ENCODE measurements at regions of chr1 and their contacts with region 1.

Region 1: GRCh38 chr1:85707990-85708828 is at the start of gene ZNHIT6:
- DNase-seq: peak; percentile 95
- ATAC-seq: peak; percentile 96
- H3K4me3 ChIP-seq: peak within 1 kb of the TSS; percentile 67 to 84 (median 77)
- H3K27ac ChIP-seq: peak within 1 kb of the TSS; percentile 83
- H3K4me1 ChIP-seq: peaks cover 34% of the 10 kb centered on the region
- H3K27me3 ChIP-seq: no peaks in the 10 kb centered on the region; a peak in 1 of 5 replicates
- CTCF ChIP-seq: peak; percentile 53
- EP300 ChIP-seq: peak in 1 of 2 experiments; percentile 27; a peak in 1 of 4 replicates
- POLR2A ChIP-seq: peak; percentile 68 to 80
- RAD21 ChIP-seq: 0 out of 2 replicates have a peak, but pooled peaks have one; percentile 51
- total RNA-seq, gene ZNHIT6: 15.2 and 18.8 TPM in 2 replicates

Region 2: DNA sequence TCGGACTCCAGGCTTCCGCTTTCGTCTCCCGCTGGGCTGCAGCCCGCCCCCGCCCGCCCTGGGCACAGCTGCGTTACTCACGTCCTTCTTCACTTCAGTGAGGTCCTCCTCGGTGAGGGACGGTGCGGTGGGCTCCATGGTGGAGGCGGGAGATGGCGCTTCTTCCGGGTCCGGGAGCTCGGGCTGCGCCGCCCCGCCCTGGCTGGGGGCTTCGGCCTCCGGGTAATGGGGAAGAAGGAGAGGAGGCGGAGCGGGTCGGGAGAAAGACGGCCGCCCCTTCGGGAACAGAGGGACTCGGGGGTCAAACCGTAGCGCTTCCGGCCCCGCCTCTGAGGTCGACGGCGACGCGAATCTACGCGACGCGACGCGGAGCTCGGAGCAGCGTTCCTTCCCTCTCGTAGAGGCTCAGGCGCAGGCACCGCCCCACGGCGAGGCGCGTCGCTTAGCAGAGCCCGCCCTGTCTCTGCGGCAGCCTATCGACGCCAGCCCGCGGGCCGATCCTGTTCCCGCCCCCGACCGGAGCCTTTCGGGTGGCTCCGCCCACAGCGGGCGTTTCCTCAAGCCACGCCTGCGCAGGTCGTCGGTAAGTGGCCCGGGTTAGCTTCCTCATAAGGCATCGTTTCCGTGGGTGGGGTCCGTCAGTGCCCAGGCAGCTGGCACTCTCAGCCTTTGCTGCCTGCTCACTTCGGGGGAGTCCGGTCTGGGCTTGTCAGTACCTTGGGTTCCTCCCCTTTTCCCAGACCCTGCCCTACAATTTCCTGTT is 431.8 kb before region 1 on chr1 and contains the start of gene BCL10:
- CTCF ChIA-PET with region 1: no interaction called
- POLR2A ChIA-PET with region 1: interaction called, 15 read pairs
- in situ Hi-C with region 1: no loop called
- intact Hi-C with region 1: no loop called
- DNase-seq: peak; percentile 94
- ATAC-seq: peak; percentile 99
- H3K4me3 ChIP-seq: peak within 1 kb of the TSS; percentile 87 to 100 (median 89)
- H3K27ac ChIP-seq: peak within 1 kb of the TSS; percentile 83
- H3K4me1 ChIP-seq: peaks cover 61% of the 10 kb centered on the region
- H3K27me3 ChIP-seq: no peaks in the 10 kb centered on the region; a peak in 1 of 5 replicates
- CTCF ChIP-seq: no peak
- EP300 ChIP-seq: no peak
- POLR2A ChIP-seq: peak; percentile 78 to 87
- RAD21 ChIP-seq: no peak
- total RNA-seq, gene BCL10: 14.1 and 20.0 TPM in 2 replicates

Region 3: DNA sequence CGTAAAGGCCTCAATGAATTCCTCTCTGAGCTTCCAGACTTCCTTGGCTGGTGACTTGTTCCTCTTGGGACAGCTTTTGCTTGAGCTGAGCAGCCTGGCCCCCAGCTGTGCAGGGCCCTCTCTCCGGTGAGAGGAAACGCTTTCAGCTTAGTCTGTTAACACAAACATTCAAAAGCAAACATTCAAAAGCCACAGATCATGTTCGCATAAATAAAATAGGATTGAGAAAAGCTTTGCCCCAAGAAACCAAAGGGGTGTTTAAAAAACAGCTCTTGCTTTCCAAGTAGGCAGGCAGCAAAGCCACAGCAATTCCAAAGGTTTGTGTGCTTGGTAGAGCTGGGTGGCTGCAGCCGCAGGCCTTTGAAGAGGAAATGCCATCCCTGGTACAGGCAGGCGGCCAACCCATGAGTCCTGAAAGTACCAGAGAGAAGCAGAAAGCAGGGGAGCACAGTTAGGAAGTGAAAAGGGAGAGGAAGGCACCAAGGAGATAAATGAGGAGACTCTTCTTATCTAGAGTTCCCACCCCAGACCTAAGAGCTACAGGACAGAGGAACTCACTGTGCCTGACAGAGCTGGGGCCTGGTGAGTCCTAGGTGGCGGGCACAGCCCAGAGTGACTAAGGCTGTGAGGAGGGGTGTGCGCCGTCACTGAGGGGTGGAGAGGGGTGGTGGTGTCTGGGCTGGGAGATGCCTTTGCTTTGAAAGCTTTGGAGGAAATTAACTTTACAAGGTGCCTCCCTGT is 79.2 kb before region 1 on chr1:
- CTCF ChIA-PET with region 1: no interaction called
- POLR2A ChIA-PET with region 1: interaction called, 15 read pairs
- in situ Hi-C with region 1: no loop called
- intact Hi-C with region 1: no loop called
- DNase-seq: peak; percentile 82
- ATAC-seq: peak; percentile 96
- H3K4me3 ChIP-seq: peak overlapping the region; percentile 48 to 62 (median 56)
- H3K27ac ChIP-seq: peak overlapping the region; percentile 91
- H3K4me1 ChIP-seq: peaks cover 41% of the 10 kb centered on the region
- H3K27me3 ChIP-seq: no peaks in the 10 kb centered on the region
- CTCF ChIP-seq: no peak
- EP300 ChIP-seq: 0 out of 4 replicates have a peak, but pooled peaks of 1 of the 2 experiments have one; percentile 10
- POLR2A ChIP-seq: peak; percentile 15 to 50; a peak in 2 of 4 replicates
- RAD21 ChIP-seq: no peak

Region 4: GRCh38 chr1:85638412-85638811 is 69.8 kb before region 1 on chr1:
- CTCF ChIA-PET with region 1: no interaction called
- POLR2A ChIA-PET with region 1: interaction called, 16 read pairs
- in situ Hi-C with region 1: no loop called
- intact Hi-C with region 1: no loop called
- DNase-seq: no peak
- ATAC-seq: no peak
- H3K4me3 ChIP-seq: no peak overlapping the region
- H3K27ac ChIP-seq: no peak overlapping the region
- H3K4me1 ChIP-seq: peaks cover 20% of the 10 kb centered on the region
- H3K27me3 ChIP-seq: no peaks in the 10 kb centered on the region
- CTCF ChIP-seq: no peak
- EP300 ChIP-seq: no peak
- POLR2A ChIP-seq: no peak
- RAD21 ChIP-seq: no peak

Region 5: GRCh38 chr1:85663382-85663781 is 44.8 kb before region 1 on chr1:
- CTCF ChIA-PET with region 1: no interaction called
- POLR2A ChIA-PET with region 1: no interaction called
- in situ Hi-C with region 1: no loop called
- intact Hi-C with region 1: no loop called
- DNase-seq: peak; percentile 9
- ATAC-seq: no peak
- H3K4me3 ChIP-seq: no peak overlapping the region
- H3K27ac ChIP-seq: no peak overlapping the region
- H3K4me1 ChIP-seq: peaks cover 9% of the 10 kb centered on the region; the same call in 1 of the 2 replicates
- H3K27me3 ChIP-seq: no peaks in the 10 kb centered on the region; a peak in 1 of 5 replicates
- CTCF ChIP-seq: no peak
- EP300 ChIP-seq: no peak
- POLR2A ChIP-seq: no peak
- RAD21 ChIP-seq: no peak

Region 6: GRCh38 chr1:85681087-85681486 is 27.1 kb before region 1 on chr1:
- CTCF ChIA-PET with region 1: no interaction called
- POLR2A ChIA-PET with region 1: interaction called, 8 read pairs
- in situ Hi-C with region 1: no loop called
- intact Hi-C with region 1: loop called (anchors 1 kb)
- DNase-seq: peak; percentile 97
- ATAC-seq: peak; percentile 100
- H3K4me3 ChIP-seq: peak overlapping the region in 2 of 3 experiments; percentile 23 to 30; a peak in 1 of 6 replicates
- H3K27ac ChIP-seq: peak overlapping the region; percentile 98
- H3K4me1 ChIP-seq: peaks cover 33% of the 10 kb centered on the region
- H3K27me3 ChIP-seq: no peaks in the 10 kb centered on the region
- CTCF ChIP-seq: no peak
- EP300 ChIP-seq: peak; percentile 89 to 99
- POLR2A ChIP-seq: no peak
- RAD21 ChIP-seq: no peak

Measured in HepG2 (cell line).